CD14-positive monocyte (primary cell): ENCODE measurements at regions of chr9 and their contacts with region 1.

Region 1: GRCh38 chr9:5510360-5510931 is at the start of gene PDCD1LG2:
- DNase-seq: peak; percentile 49 to 80 (median 75)
- H3K4me3 ChIP-seq: peak within 1 kb of the TSS in 2 of 3 experiments; percentile 43 to 52
- H3K4me3 Mint-ChIP-seq: peak within 1 kb of the TSS; percentile 70 to 84
- H3K27ac ChIP-seq: peak within 1 kb of the TSS; percentile 47 to 82
- H3K27ac Mint-ChIP-seq: peak within 1 kb of the TSS; percentile 92 to 96 (median 94)
- H3K4me1 ChIP-seq: peaks cover 44 to 58% of the 10 kb centered on the region in 2 donors
- H3K4me1 Mint-ChIP-seq: peaks cover 59% of the 10 kb centered on the region
- H3K27me3 ChIP-seq: no peaks in the 10 kb centered on the region
- H3K27me3 Mint-ChIP-seq: peaks cover 0 to 2% (median 0%) of the 10 kb centered on the region in 3 donors
- CTCF ChIP-seq: no peak
- polyA plus RNA-seq, gene PDCD1LG2: 0.16 to 0.41 (median 0.17) TPM

Region 2: DNA sequence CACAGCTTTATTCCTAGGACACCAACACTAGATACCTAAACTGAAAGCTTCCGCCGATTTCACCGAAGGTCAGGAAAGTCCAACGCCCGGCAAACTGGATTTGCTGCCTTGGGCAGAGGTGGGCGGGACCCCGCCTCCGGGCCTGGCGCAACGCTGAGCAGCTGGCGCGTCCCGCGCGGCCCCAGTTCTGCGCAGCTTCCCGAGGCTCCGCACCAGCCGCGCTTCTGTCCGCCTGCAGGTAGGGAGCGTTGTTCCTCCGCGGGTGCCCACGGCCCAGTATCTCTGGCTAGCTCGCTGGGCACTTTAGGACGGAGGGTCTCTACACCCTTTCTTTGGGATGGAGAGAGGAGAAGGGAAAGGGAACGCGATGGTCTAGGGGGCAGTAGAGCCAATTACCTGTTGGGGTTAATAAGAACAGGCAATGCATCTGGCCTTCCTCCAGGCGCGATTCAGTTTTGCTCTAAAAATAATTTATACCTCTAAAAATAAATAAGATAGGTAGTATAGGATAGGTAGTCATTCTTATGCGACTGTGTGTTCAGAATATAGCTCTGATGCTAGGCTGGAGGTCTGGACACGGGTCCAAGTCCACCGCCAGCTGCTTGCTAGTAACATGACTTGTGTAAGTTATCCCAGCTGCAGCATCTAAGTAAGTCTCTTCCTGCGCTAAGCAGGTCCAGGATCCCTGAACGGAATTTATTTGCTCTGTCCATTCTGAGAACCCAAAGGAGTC is 59.9 kb before region 1 on chr9 and contains the start of gene CD274:
- intact Hi-C with region 1: loop called (anchors 10 kb)
- DNase-seq: peak; percentile 65 to 91 (median 66)
- H3K4me3 ChIP-seq: peak within 1 kb of the TSS; percentile 76 to 94 (median 82)
- H3K4me3 Mint-ChIP-seq: peak within 1 kb of the TSS; percentile 81 to 93
- H3K27ac ChIP-seq: peak within 1 kb of the TSS; percentile 59 to 85
- H3K27ac Mint-ChIP-seq: peak within 1 kb of the TSS; percentile 87 to 93 (median 89)
- H3K4me1 ChIP-seq: peaks cover 39 to 47% of the 10 kb centered on the region in 2 donors
- H3K4me1 Mint-ChIP-seq: peaks cover 39% of the 10 kb centered on the region
- H3K27me3 ChIP-seq: no peaks in the 10 kb centered on the region
- H3K27me3 Mint-ChIP-seq: peaks cover 0 to 3% (median 0%) of the 10 kb centered on the region in 3 donors
- CTCF ChIP-seq: peak; percentile 62
- polyA plus RNA-seq, gene CD274: 0.24 to 0.84 TPM in 2 of 3 donors, not detected in the other

Region 3: DNA sequence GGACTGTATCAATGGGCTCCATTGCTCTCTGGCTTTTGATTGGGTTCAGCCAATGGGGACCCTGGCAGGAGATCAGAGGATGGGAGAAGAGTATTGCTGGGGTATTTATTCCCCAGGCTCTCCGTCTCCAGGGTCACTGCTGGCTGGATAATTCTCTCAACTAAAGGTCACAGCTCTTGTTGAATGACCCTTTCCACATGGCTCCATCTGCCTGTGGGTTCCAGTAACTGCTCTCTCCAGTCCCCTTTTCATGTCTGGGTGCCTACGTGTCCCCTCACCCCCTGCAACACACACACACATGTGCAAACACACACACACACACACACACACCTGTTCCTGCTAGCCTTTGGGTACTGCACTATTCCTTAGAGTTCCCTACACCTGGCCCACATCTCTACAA is 64.6 kb after region 1 on chr9:
- intact Hi-C with region 1: no loop called
- DNase-seq: peak in 1 of 3 donors; percentile 30
- H3K4me3 ChIP-seq: no peak overlapping the region
- H3K4me3 Mint-ChIP-seq: no peak overlapping the region
- H3K27ac ChIP-seq: no peak overlapping the region
- H3K27ac Mint-ChIP-seq: peak overlapping the region in 1 of 7 donors; percentile 41
- H3K4me1 ChIP-seq: peaks cover 4 to 11% of the 10 kb centered on the region in 2 donors
- H3K4me1 Mint-ChIP-seq: peaks cover 12% of the 10 kb centered on the region
- H3K27me3 ChIP-seq: no peaks in the 10 kb centered on the region
- H3K27me3 Mint-ChIP-seq: peaks cover 0 to 5% (median 3%) of the 10 kb centered on the region in 3 donors
- CTCF ChIP-seq: no peak

Region 4: GRCh38 chr9:6076851-6077250 is 566.4 kb after region 1 on chr9:
- intact Hi-C with region 1: no loop called
- DNase-seq: no peak
- H3K4me3 ChIP-seq: no peak overlapping the region
- H3K4me3 Mint-ChIP-seq: no peak overlapping the region
- H3K27ac ChIP-seq: no peak overlapping the region
- H3K27ac Mint-ChIP-seq: no peak overlapping the region
- H3K4me1 ChIP-seq: peaks cover 13 to 20% of the 10 kb centered on the region in 2 donors
- H3K4me1 Mint-ChIP-seq: peaks cover 25% of the 10 kb centered on the region
- H3K27me3 ChIP-seq: no peaks in the 10 kb centered on the region
- H3K27me3 Mint-ChIP-seq: peaks cover 0 to 2% (median 1%) of the 10 kb centered on the region in 3 donors
- CTCF ChIP-seq: no peak

Region 5: DNA sequence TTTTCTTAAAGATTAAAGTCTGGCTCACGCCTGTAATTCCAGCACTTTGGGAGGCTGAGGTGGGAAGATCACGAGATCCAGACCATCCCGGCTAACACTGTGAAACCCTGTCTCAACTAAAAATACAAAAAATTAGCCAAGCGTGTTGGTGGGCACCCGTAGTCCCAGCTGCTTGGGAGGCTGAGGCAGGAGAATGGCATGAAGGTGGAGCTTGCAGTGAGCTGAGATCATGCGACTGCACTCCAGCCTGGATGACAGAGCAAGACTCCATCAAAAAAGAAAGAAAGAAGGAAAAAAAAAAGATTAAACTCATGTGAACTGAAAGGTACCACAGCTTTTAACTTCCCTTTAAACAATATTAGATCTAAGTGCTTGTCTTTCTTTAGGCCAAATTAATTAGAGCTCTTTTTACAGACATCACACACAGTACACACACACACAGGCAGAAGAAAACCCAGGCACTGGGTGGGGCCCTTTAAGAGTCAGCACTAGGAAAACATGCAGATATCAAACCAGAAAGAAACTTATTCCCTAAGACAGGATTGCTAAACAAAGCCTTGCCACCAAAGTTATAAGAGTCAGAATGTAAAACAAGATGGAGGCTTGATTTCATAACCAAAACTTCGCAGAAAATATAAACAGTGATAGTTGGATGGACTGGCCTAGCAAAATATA is 873.2 kb after region 1 on chr9:
- intact Hi-C with region 1: no loop called
- DNase-seq: no peak
- H3K4me3 ChIP-seq: no peak overlapping the region
- H3K4me3 Mint-ChIP-seq: no peak overlapping the region
- H3K27ac ChIP-seq: no peak overlapping the region
- H3K27ac Mint-ChIP-seq: peak overlapping the region in 1 of 7 donors; percentile 26
- H3K4me1 ChIP-seq: no peaks in the 10 kb centered on the region
- H3K4me1 Mint-ChIP-seq: no peaks in the 10 kb centered on the region
- H3K27me3 ChIP-seq: no peaks in the 10 kb centered on the region
- H3K27me3 Mint-ChIP-seq: no peaks in the 10 kb centered on the region
- CTCF ChIP-seq: no peak